Sigmoid colon (tissue), 7 donors: ENCODE measurements at regions of chr11 and their contacts with region 1.

Region 1: GRCh38 chr11:43680521-43681400 is at the start of gene HSD17B12:
- DNase-seq: peak; percentile 99
- H3K4me3 ChIP-seq: peak within 1 kb of the TSS; percentile 52 to 94 (median 65)
- H3K27ac ChIP-seq: peak within 1 kb of the TSS; percentile 87 to 94 (median 90)
- H3K4me1 ChIP-seq: peaks cover 0 to 17% (median 10%) of the 10 kb centered on the region in 4 donors
- H3K27me3 ChIP-seq: no peaks in the 10 kb centered on the region
- CTCF ChIP-seq: no peak
- EP300 ChIP-seq: peak in 1 of 4 donors; percentile 24
- POLR2A ChIP-seq: peak; percentile 71 to 84
- total RNA-seq, gene HSD17B12: 29.6 to 40.3 (median 36.0) TPM

Region 2: GRCh38 chr11:43467958-43468357 is 212.8 kb before region 1 on chr11:
- intact Hi-C with region 1: no loop called
- DNase-seq: no peak
- H3K4me3 ChIP-seq: no peak overlapping the region
- H3K27ac ChIP-seq: no peak overlapping the region
- H3K4me1 ChIP-seq: no peaks in the 10 kb centered on the region
- H3K27me3 ChIP-seq: no peaks in the 10 kb centered on the region
- CTCF ChIP-seq: no peak
- EP300 ChIP-seq: no peak
- POLR2A ChIP-seq: no peak

Region 3: DNA sequence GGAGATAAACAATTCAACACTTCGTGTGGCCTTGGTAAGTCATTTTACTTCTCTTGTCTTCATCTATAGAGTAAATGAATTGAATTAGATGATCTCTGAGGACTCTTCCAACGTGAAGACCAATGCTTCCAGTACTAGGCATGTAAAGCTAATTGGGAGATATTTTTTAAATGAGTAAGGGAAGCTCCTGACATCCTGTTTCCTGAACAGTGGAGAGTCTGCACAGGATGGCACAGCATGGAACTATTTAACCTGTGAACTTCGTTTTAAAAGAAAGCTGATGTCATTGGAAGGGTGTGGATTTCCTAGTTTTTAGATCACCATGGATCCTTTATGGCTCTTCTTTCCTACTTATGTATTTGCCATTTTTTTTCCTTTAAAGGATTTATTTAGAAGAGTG is 48.6 kb before region 1 on chr11:
- intact Hi-C with region 1: no loop called
- DNase-seq: no peak
- H3K4me3 ChIP-seq: no peak overlapping the region
- H3K27ac ChIP-seq: no peak overlapping the region
- H3K4me1 ChIP-seq: no peaks in the 10 kb centered on the region
- H3K27me3 ChIP-seq: peaks cover 0 to 41% (median 22%) of the 10 kb centered on the region in 3 donors
- CTCF ChIP-seq: no peak
- EP300 ChIP-seq: no peak
- POLR2A ChIP-seq: no peak

Region 4: DNA sequence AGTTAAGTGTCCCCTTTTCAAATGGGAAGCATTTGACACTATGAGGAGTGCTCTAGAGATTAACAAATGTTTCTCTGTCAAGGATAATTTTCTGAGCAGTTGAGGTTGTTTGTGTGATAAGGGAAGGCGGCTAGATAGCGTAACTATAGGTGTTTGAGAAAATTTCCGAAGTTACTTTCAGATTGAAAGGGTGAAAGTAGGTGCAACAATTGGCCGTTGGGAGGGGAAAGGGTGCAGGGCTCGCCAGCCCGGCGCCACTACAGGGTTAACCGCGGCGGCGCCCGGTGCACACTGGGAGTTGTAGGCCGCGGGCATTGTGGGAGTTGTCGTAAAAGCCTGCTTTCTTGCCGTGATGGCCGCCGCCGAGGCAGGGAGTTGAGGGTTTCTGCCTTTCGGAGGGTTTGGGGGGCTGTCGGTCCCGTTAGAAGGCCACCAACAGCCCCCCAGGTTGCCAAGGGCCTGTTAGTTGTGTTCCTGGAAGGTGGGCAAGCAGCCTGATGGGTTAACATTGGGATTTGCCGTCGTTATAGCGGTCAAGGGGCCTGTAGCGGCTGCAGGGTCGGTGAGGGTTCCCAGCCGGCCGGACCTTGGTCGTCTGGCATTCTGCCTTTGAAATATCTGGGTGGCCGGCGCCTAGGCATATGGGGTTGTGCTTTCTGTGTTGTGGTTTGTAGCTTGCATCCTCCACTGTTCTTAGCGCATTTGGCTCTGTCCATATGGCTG is 36.7 kb before region 1 on chr11:
- intact Hi-C with region 1: loop called (anchors 1 kb)
- DNase-seq: peak; percentile 90
- H3K4me3 ChIP-seq: peak overlapping the region; percentile 53 to 92 (median 80)
- H3K27ac ChIP-seq: peak overlapping the region; percentile 65 to 81 (median 74)
- H3K4me1 ChIP-seq: peaks cover 0 to 22% (median 10%) of the 10 kb centered on the region in 4 donors
- H3K27me3 ChIP-seq: peaks cover 0 to 38% (median 0%) of the 10 kb centered on the region in 3 donors
- CTCF ChIP-seq: no peak
- EP300 ChIP-seq: peak in 1 of 4 donors; percentile 45
- POLR2A ChIP-seq: peak in 1 of 2 donors; percentile 11

Region 5: GRCh38 chr11:43852057-43852636 is 171.4 kb after region 1 on chr11:
- intact Hi-C with region 1: loop called (anchors 10 kb)
- DNase-seq: no peak
- H3K4me3 ChIP-seq: no peak overlapping the region
- H3K27ac ChIP-seq: no peak overlapping the region
- H3K4me1 ChIP-seq: no peaks in the 10 kb centered on the region
- H3K27me3 ChIP-seq: no peaks in the 10 kb centered on the region
- CTCF ChIP-seq: peak in 3 of 4 experiments; percentile 40 to 65 (median 64)
- EP300 ChIP-seq: no peak
- POLR2A ChIP-seq: no peak

Region 6: DNA sequence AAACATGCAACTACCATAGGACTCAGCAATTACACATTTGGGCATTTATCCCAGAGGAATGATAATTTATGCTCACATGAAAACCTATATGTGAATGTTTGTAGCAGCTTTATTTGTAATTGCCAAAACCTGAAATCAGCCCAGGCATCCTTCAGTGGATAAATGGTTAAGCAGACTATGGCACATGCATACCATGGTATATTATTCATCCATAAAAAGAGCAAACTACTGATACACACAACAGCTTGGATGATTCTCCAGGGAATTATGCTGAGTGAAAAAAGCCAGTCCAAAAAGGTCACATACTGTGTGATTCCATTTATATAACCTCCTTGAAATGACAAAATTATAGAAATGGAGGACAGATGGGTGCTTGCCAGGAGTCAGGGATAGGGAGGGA is 542.5 kb after region 1 on chr11:
- intact Hi-C with region 1: no loop called
- DNase-seq: no peak
- H3K4me3 ChIP-seq: no peak overlapping the region
- H3K27ac ChIP-seq: no peak overlapping the region
- H3K4me1 ChIP-seq: peaks cover 0 to 12% (median 6%) of the 10 kb centered on the region in 4 donors
- H3K27me3 ChIP-seq: no peaks in the 10 kb centered on the region
- CTCF ChIP-seq: no peak
- EP300 ChIP-seq: no peak
- POLR2A ChIP-seq: no peak